GM12878 (cell line): ENCODE measurements at regions of chr3 and their contacts with region 1.

Region 1: GRCh38 chr3:16290007-16290826 is 25.2 kb downstream of the OXNAD1 start:
- DNase-seq: no peak
- ATAC-seq: peak; percentile 58
- H3K4me3 ChIP-seq: no peak overlapping the region
- H3K27ac ChIP-seq: peak overlapping the region; percentile 5; the same call in 1 of the 2 replicates
- H3K4me1 ChIP-seq: peaks cover 11% of the 10 kb centered on the region
- H3K27me3 ChIP-seq: no peaks in the 10 kb centered on the region
- CTCF ChIP-seq: peak; percentile 64 to 89 (median 81)
- EP300 ChIP-seq: no peak
- POLR2A ChIP-seq: no peak
- RAD21 ChIP-seq: peak; percentile 96

Region 2: DNA sequence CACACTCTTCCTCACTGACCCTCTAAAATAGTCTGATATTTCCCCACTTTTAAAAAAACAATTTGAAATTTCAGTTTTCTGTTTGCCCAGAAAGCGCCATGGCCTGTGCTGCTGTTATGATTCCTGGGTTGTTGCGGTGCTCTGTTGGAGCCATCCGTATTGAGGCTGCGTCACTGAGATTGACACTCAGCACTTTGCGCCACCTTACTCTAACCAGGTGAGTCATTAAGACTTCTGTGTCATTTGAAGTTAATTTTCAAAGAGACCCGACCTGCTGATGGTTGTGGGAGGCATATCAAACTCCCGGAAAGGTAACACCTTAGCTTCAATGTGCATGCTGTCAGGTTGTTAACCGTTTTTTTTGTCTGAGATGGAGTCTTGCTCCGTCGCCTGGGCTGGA is 19.4 kb before region 1 on chr3:
- CTCF ChIA-PET with region 1: interaction called, 93 read pairs
- POLR2A ChIA-PET with region 1: interaction called, 7 read pairs
- RAD21 ChIA-PET with region 1: interaction called, 15 read pairs
- SMC1A ChIA-PET with region 1: interaction called, 63 read pairs
- in situ Hi-C with region 1: no loop called
- intact Hi-C with region 1: no loop called
- DNase-seq: no peak
- ATAC-seq: no peak
- H3K4me3 ChIP-seq: no peak overlapping the region
- H3K27ac ChIP-seq: no peak overlapping the region
- H3K4me1 ChIP-seq: peaks cover 2% of the 10 kb centered on the region; the same call in 1 of the 2 replicates
- H3K27me3 ChIP-seq: no peaks in the 10 kb centered on the region
- CTCF ChIP-seq: no peak
- EP300 ChIP-seq: no peak
- POLR2A ChIP-seq: no peak
- RAD21 ChIP-seq: no peak

Region 3: DNA sequence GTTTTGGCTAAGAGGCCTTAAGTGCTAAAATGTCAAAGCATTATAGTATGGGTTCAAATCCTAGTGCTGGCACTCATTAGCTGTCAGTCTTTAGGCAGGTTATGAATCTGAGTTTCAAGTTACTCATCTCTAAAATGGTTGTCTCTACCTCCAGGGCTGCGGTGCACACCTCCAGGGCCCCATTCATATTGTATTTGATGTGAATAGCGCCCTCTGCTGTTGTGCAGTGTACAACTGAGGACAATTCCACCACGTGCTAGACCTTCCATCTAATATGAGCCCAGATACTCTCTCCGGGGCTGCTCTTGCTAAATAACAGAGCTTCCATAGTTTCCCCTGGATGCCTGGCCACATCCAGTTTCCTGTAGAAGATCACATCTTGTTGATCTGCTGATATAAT is 29.1 kb after region 1 on chr3:
- CTCF ChIA-PET with region 1: interaction called, 32 read pairs
- POLR2A ChIA-PET with region 1: no interaction called
- RAD21 ChIA-PET with region 1: interaction called, 3 read pairs
- SMC1A ChIA-PET with region 1: interaction called, 20 read pairs
- in situ Hi-C with region 1: no loop called
- intact Hi-C with region 1: loop called (anchors 1 kb)
- DNase-seq: no peak
- ATAC-seq: peak; percentile 76
- H3K4me3 ChIP-seq: no peak overlapping the region
- H3K27ac ChIP-seq: no peak overlapping the region
- H3K4me1 ChIP-seq: no peaks in the 10 kb centered on the region
- H3K27me3 ChIP-seq: no peaks in the 10 kb centered on the region
- CTCF ChIP-seq: peak; percentile 31 to 51 (median 40); a peak in 5 of 6 replicates
- EP300 ChIP-seq: no peak
- POLR2A ChIP-seq: no peak
- RAD21 ChIP-seq: peak; percentile 30; the same call in 1 of the 2 replicates

Region 4: GRCh38 chr3:16496408-16497222 is 206.4 kb after region 1 on chr3:
- CTCF ChIA-PET with region 1: interaction called, 16 read pairs
- POLR2A ChIA-PET with region 1: no interaction called
- RAD21 ChIA-PET with region 1: interaction called, 4 read pairs
- SMC1A ChIA-PET with region 1: interaction called, 8 read pairs
- in situ Hi-C with region 1: no loop called
- intact Hi-C with region 1: no loop called
- DNase-seq: peak; percentile 60
- ATAC-seq: peak; percentile 73
- H3K4me3 ChIP-seq: no peak overlapping the region
- H3K27ac ChIP-seq: peak overlapping the region; percentile 29; the same call in 1 of the 2 replicates
- H3K4me1 ChIP-seq: peaks cover 48% of the 10 kb centered on the region
- H3K27me3 ChIP-seq: no peaks in the 10 kb centered on the region
- CTCF ChIP-seq: no peak
- EP300 ChIP-seq: no peak
- POLR2A ChIP-seq: no peak
- RAD21 ChIP-seq: no peak

Region 5: GRCh38 chr3:16545413-16546185 is 255.4 kb after region 1 on chr3:
- CTCF ChIA-PET with region 1: interaction called, 170 read pairs
- POLR2A ChIA-PET with region 1: interaction called, 4 read pairs
- RAD21 ChIA-PET with region 1: interaction called, 91 read pairs
- SMC1A ChIA-PET with region 1: interaction called, 67 read pairs
- in situ Hi-C with region 1: loop called (anchors 5 kb)
- intact Hi-C with region 1: loop called (anchors 1 kb)
- DNase-seq: no peak
- ATAC-seq: no peak
- H3K4me3 ChIP-seq: no peak overlapping the region
- H3K27ac ChIP-seq: no peak overlapping the region
- H3K4me1 ChIP-seq: peaks cover 9% of the 10 kb centered on the region
- H3K27me3 ChIP-seq: no peaks in the 10 kb centered on the region
- CTCF ChIP-seq: no peak
- EP300 ChIP-seq: no peak
- POLR2A ChIP-seq: no peak
- RAD21 ChIP-seq: no peak

Region 6: GRCh38 chr3:16828815-16829214 is 538.6 kb after region 1 on chr3:
- CTCF ChIA-PET with region 1: interaction called, 3 read pairs
- POLR2A ChIA-PET with region 1: no interaction called
- RAD21 ChIA-PET with region 1: no interaction called
- SMC1A ChIA-PET with region 1: no interaction called
- in situ Hi-C with region 1: no loop called
- intact Hi-C with region 1: loop called (anchors 10 kb)
- DNase-seq: no peak
- ATAC-seq: peak; percentile 90
- H3K4me3 ChIP-seq: no peak overlapping the region
- H3K27ac ChIP-seq: no peak overlapping the region
- H3K4me1 ChIP-seq: peaks cover 8% of the 10 kb centered on the region
- H3K27me3 ChIP-seq: no peaks in the 10 kb centered on the region
- CTCF ChIP-seq: peak; percentile 58 to 65 (median 60)
- EP300 ChIP-seq: no peak
- POLR2A ChIP-seq: no peak
- RAD21 ChIP-seq: peak; percentile 93

Region 7: DNA sequence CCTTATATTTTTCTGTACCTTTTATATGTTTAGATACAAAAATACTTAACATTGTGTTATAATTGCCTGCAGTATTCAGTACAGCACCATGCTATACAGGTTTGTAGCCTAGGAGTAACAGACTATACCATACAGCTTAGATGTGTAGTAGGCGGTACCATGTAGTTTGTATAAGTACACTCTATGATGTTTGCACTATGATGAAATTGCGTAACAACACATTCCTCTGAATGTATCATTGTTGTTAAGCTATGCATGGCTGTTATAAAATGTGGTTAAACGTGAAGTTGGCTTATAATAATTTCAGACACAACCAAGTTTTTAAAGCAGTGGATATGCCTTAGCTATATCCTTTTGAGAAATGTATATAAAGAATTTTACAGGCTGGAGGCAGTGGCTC is 922.9 kb after region 1 on chr3:
- CTCF ChIA-PET with region 1: no interaction called
- POLR2A ChIA-PET with region 1: no interaction called
- RAD21 ChIA-PET with region 1: no interaction called
- SMC1A ChIA-PET with region 1: no interaction called
- in situ Hi-C with region 1: loop called (anchors 25 kb)
- intact Hi-C with region 1: no loop called
- DNase-seq: no peak
- ATAC-seq: no peak
- H3K4me3 ChIP-seq: no peak overlapping the region
- H3K27ac ChIP-seq: no peak overlapping the region
- H3K4me1 ChIP-seq: no peaks in the 10 kb centered on the region
- H3K27me3 ChIP-seq: no peaks in the 10 kb centered on the region
- CTCF ChIP-seq: no peak
- EP300 ChIP-seq: no peak
- POLR2A ChIP-seq: no peak
- RAD21 ChIP-seq: no peak